ENCODE measurements at regions of chr22 and their contacts with region 1.

Region 1: GRCh38 chr22:27405672-27406388 is 395.7 kb downstream of the MN1 start:
- DNase-seq: peak; percentile 65 to 86
- ATAC-seq: peak; percentile 72
- H3K4me3 ChIP-seq: no peak overlapping the region
- H3K27ac ChIP-seq: no peak overlapping the region
- H3K4me1 ChIP-seq: no peaks in the 10 kb centered on the region
- H3K27me3 ChIP-seq: no peaks in the 10 kb centered on the region

Region 2: DNA sequence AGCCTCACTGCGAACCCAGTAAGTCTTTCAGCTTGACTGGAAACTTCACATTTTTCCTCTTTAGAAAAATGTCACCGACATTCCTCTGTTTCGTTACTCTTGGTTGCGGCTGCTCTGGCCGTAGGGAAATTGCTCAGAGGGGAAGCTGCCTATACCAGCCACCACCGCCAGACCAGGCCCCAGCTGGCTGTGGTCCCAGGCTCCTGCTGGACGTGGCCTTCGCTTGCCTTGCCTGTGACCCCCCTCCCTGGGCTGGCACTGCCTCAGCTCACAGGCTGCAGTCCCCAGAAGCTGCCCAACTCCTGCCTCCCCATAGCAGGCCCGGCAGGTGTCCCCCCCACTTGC is 197.9 kb after region 1 on chr22:
- intact Hi-C with region 1: loop called in 1 of 2 experiments (anchors 10 kb)
- DNase-seq: peak; percentile 91 to 92
- ATAC-seq: no peak
- H3K4me3 ChIP-seq: no peak overlapping the region
- H3K27ac ChIP-seq: peak overlapping the region in 1 of 2 donors; percentile 3
- H3K4me1 ChIP-seq: no peaks in the 10 kb centered on the region
- H3K27me3 ChIP-seq: no peaks in the 10 kb centered on the region

Region 3: GRCh38 chr22:27799334-27800249 is 393.8 kb after region 1 on chr22:
- intact Hi-C with region 1: loop called (anchors 1 to 5 kb)
- DNase-seq: peak; percentile 62 to 86
- ATAC-seq: peak; percentile 23
- H3K4me3 ChIP-seq: peak overlapping the region; percentile 90
- H3K27ac ChIP-seq: peak overlapping the region in 1 of 2 donors; percentile 56
- H3K4me1 ChIP-seq: no peaks in the 10 kb centered on the region
- H3K27me3 ChIP-seq: no peaks in the 10 kb centered on the region